GM10248 (cell line): ENCODE measurements at regions of chr4 and their contacts with region 1.

Region 1: GRCh38 chr4:159212675-159213293 is 109.9 kb downstream of the RAPGEF2 start:
- DNase-seq: no peak
- CTCF ChIP-seq: no peak

Region 2: GRCh38 chr4:159191989-159192388 is 20.8 kb before region 1 on chr4:
- CTCF ChIA-PET with region 1: interaction called, 10 read pairs
- POLR2A ChIA-PET with region 1: no interaction called
- DNase-seq: no peak
- CTCF ChIP-seq: peak; percentile 29

Region 3: DNA sequence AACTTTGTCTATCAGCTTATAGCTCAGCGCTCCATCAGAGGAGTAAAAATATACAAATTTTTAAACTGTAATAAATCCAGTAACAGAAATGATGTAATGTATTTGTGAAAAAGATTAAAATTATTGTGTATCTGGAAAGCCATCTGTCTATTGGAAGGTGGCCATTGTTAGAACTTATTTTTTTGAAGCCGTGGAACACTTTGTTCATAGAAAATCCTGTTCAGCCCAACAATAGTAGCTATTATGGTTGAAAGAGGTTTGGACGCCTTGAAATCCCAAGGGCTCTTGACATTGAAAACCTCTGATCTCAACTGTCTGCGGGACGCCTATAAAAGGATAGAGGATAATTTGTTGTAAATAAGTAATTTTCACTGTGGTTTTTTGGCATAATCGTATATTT is 11.6 kb before region 1 on chr4:
- CTCF ChIA-PET with region 1: interaction called, 25 read pairs
- POLR2A ChIA-PET with region 1: no interaction called
- DNase-seq: no peak
- CTCF ChIP-seq: no peak